Activated T-helper 1 cell treated with anti-CD3 and anti-CD28 coated beads, Interleukin-12 subunit alpha, Interleukin-12 subunit beta, Interleukin-2, Interleukin-4 antibody, amounts not matched to agents 30 ng/mL and 10 ng/mL and 1 ng/mL, durations not matched to agents 14 hours and 24 hours and 36 hours (primary cell): ENCODE measurements at regions of chr16 and their contacts with region 1.

Region 1: GRCh38 chr16:46673320-46674013 is 15.5 kb downstream of the VPS35 start:
- DNase-seq: peak; percentile 22
- H3K4me3 Mint-ChIP-seq: no peak overlapping the region
- H3K27ac Mint-ChIP-seq: no peak overlapping the region
- H3K4me1 Mint-ChIP-seq: peaks cover 4% of the 10 kb centered on the region
- H3K27me3 Mint-ChIP-seq: no peaks in the 10 kb centered on the region

Region 2: GRCh38 chr16:46801428-46802049 is 128.1 kb after region 1 on chr16:
- intact Hi-C with region 1: loop called (anchors 5 kb)
- DNase-seq: no peak
- H3K4me3 Mint-ChIP-seq: no peak overlapping the region
- H3K27ac Mint-ChIP-seq: peak overlapping the region; percentile 62
- H3K4me1 Mint-ChIP-seq: peaks cover 17% of the 10 kb centered on the region
- H3K27me3 Mint-ChIP-seq: no peaks in the 10 kb centered on the region

Region 3: GRCh38 chr16:46908540-46909372 is 235.3 kb after region 1 on chr16:
- intact Hi-C with region 1: loop called (anchors 1 kb)
- DNase-seq: peak; percentile 37
- H3K4me3 Mint-ChIP-seq: no peak overlapping the region
- H3K27ac Mint-ChIP-seq: peak overlapping the region; percentile 34
- H3K4me1 Mint-ChIP-seq: peaks cover 16% of the 10 kb centered on the region
- H3K27me3 Mint-ChIP-seq: no peaks in the 10 kb centered on the region

Region 4: GRCh38 chr16:46929378-46930332 is 256.2 kb after region 1 on chr16:
- intact Hi-C with region 1: loop called (anchors 1 kb)
- DNase-seq: peak; percentile 62
- H3K4me3 Mint-ChIP-seq: no peak overlapping the region
- H3K27ac Mint-ChIP-seq: no peak overlapping the region
- H3K4me1 Mint-ChIP-seq: peaks cover 11% of the 10 kb centered on the region
- H3K27me3 Mint-ChIP-seq: no peaks in the 10 kb centered on the region